Right ventricle myocardium inferior (tissue), 1 donor: ENCODE measurements at regions of chr21 and their contacts with region 1.

Region 1: DNA sequence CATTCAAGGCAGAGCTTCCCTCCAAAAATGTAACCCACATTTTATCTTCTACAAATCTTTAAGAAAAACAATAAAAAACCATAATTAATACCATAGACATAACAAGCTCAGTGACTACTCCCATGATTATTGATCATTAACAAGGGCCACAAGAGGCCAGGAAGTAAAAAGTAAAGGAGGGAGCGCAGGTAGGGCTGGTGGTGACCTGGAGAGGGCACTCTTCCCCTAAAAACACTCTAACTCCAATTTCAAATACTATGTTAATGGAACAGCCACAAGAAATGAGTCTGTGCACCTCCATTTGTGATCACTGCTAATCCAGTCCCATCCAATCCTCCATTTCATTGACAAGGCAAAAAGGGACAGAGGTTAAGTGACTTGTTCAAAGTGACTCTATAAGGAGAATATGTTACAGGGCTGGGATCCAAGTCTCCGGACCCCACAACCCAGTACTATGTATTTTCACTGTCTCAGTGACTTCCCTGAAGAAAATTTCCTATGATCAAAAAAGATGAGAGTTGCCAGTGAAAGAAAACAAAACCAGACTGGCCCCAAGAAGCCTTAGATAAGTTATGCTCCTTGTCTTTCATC is 41.2 kb upstream of the CFAP298 start:
- DNase-seq: no peak
- ATAC-seq: no peak

Region 2: GRCh38 chr21:32475164-32475812 is 178.1 kb before region 1 on chr21:
- intact Hi-C with region 1: no loop called
- DNase-seq: no peak
- ATAC-seq: no peak

Region 3: GRCh38 chr21:32826329-32827167 is 173.1 kb after region 1 on chr21:
- intact Hi-C with region 1: loop called (anchors 5 kb)
- DNase-seq: no peak
- ATAC-seq: peak; percentile 80